Heart right ventricle (tissue), 16 donors: ENCODE measurements at regions of chr14 and their contacts with region 1.

Region 1: DNA sequence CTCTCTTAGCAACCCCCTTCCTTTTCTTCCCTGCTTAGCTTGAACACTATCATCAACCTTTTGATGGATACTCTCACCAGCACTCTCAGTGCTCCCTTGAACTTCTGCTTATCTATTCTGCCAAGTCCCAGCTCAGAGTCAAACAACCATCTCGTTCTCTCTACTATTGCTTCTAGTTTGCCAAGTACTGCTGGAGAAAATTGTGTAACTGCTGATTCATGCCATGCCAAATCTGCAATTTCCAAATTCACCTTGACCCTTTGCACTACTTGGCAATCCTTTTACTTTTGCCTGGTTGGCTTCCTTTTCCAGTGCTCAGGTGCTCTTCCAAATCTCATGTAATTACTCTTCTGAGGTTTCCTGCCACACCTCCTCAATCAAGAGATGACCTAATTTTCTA is 2.8 kb upstream of the CCDC196 start:
- DNase-seq: no peak
- ATAC-seq: peak in 7 of 8 donors; percentile 44 to 97 (median 89)
- H3K4me3 ChIP-seq: no peak overlapping the region
- H3K27ac ChIP-seq: peak overlapping the region in 4 of 10 donors; percentile 15 to 61 (median 37)
- H3K4me1 ChIP-seq: peaks cover 0 to 25% (median 15%) of the 10 kb centered on the region in 9 donors
- H3K27me3 ChIP-seq: no peaks in the 10 kb centered on the region
- CTCF ChIP-seq: no peak

Region 2: GRCh38 chr14:66403183-66403582 is 80.1 kb before region 1 on chr14:
- intact Hi-C with region 1: loop called in 1 of 10 experiments (anchors 5 kb)
- DNase-seq: no peak
- ATAC-seq: peak in 6 of 8 donors; percentile 20 to 69 (median 60)
- H3K4me3 ChIP-seq: no peak overlapping the region
- H3K27ac ChIP-seq: no peak overlapping the region
- H3K4me1 ChIP-seq: peaks cover 0 to 14% (median 5%) of the 10 kb centered on the region in 9 donors
- H3K27me3 ChIP-seq: no peaks in the 10 kb centered on the region
- CTCF ChIP-seq: peak in 7 of 9 donors; percentile 33 to 60 (median 45)

Region 3: DNA sequence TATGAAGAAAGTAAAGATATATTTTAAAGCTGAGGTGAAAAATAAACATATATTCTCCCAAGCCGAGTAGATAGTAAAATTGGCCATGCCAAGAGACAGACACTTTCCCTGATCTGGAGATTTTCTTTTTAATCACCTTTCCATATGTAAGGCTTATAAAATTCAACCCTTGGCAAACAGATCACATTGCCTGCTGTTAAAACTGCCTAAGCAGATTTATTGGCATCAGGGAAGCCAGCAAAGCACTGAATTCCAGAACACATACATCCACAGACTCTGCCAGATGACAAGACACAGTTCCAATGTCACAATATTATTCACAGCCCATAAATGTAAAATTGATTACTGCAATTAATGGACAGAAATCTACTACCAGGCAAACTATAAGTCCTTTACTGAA is 627.7 kb after region 1 on chr14:
- intact Hi-C with region 1: loop called in 1 of 10 experiments (anchors 10 kb)
- DNase-seq: no peak
- ATAC-seq: no peak
- H3K4me3 ChIP-seq: no peak overlapping the region
- H3K27ac ChIP-seq: no peak overlapping the region
- H3K4me1 ChIP-seq: no peaks in the 10 kb centered on the region
- H3K27me3 ChIP-seq: no peaks in the 10 kb centered on the region
- CTCF ChIP-seq: no peak